ENCODE measurements at regions of chr18 and their contacts with region 1.

Region 1: GRCh38 chr18:24741965-24742724 is 281.7 kb downstream of the HRH4 start:
- DNase-seq: no peak
- H3K4me3 Mint-ChIP-seq: no peak overlapping the region
- H3K27ac Mint-ChIP-seq: no peak overlapping the region
- H3K4me1 Mint-ChIP-seq: no peaks in the 10 kb centered on the region
- H3K27me3 Mint-ChIP-seq: peaks cover 52% of the 10 kb centered on the region
- CTCF ChIP-seq: no peak

Region 2: GRCh38 chr18:24778810-24779418 is 36.8 kb after region 1 on chr18:
- CTCF ChIA-PET with region 1: no interaction called
- intact Hi-C with region 1: loop called (anchors 5 kb)
- DNase-seq: peak; percentile 24
- H3K4me3 Mint-ChIP-seq: no peak overlapping the region
- H3K27ac Mint-ChIP-seq: no peak overlapping the region
- H3K4me1 Mint-ChIP-seq: peaks cover 18% of the 10 kb centered on the region
- H3K27me3 Mint-ChIP-seq: no peaks in the 10 kb centered on the region
- CTCF ChIP-seq: no peak

Region 3: DNA sequence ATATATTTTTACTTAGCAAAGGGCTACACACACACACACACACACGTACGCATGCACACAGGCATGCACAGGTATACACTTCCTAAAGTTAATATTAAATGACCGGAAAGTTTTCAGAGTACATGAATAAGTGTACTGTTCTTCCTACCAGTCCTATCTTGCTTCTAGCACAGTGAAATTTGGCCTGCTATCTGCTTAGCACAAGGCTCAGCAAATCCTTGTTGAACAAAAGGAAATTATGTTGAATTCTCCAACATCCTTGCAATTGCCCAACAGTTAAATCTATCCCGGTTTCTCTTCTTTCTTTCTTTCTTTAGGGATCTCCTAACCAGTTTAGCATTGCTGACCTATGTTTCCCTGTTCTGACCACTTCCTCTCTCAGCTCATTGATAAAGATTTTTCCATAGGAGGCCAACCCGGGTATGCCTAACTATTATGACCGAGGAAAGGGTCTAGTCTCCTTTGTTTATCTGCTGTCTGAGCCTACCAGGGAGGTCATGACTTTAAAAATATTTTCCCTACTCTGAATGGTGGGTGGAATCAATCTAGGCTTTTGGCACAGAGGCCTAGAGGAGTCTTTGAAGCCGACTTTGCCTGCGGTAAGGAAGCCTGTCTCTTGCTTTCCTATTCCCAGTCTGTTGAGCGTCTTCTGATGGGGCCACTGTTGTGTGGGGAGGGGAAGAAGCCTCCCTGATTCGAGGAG is 119.0 kb after region 1 on chr18:
- CTCF ChIA-PET with region 1: no interaction called
- intact Hi-C with region 1: no loop called
- DNase-seq: no peak
- H3K4me3 Mint-ChIP-seq: no peak overlapping the region
- H3K27ac Mint-ChIP-seq: no peak overlapping the region
- H3K4me1 Mint-ChIP-seq: no peaks in the 10 kb centered on the region
- H3K27me3 Mint-ChIP-seq: peaks cover 92% of the 10 kb centered on the region
- CTCF ChIP-seq: no peak